GM18951 (cell line): ENCODE measurements at regions of chr6 and their contacts with region 1.

Region 1: GRCh38 chr6:82006027-82006738 is 241.4 kb downstream of the IBTK start:
- POLR2A ChIP-seq: no peak

Region 2: GRCh38 chr6:80605165-80605989 is 1400.8 kb before region 1 on chr6:
- in situ Hi-C with region 1: loop called (anchors 25 kb)
- POLR2A ChIP-seq: no peak

Region 3: DNA sequence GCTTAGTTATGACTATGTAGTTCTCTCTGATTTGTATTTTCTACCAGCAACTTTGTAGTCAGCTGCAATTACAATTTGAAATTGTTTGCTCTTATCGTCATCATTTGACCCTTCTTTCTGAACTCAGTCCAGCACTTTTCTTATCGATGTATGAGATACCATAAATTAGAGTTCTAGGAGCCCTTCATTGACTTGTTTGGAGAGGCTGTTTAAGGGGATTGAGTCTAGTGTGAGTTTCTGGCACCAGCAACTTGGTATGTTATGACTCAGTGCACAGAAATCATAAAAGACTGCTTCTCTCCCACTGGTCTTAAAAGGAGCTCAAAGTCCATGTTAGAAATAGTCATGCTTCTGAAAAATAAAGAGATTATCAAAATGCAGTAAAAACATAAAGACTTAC is 444.0 kb before region 1 on chr6:
- in situ Hi-C with region 1: no loop called
- POLR2A ChIP-seq: no peak

Region 4: DNA sequence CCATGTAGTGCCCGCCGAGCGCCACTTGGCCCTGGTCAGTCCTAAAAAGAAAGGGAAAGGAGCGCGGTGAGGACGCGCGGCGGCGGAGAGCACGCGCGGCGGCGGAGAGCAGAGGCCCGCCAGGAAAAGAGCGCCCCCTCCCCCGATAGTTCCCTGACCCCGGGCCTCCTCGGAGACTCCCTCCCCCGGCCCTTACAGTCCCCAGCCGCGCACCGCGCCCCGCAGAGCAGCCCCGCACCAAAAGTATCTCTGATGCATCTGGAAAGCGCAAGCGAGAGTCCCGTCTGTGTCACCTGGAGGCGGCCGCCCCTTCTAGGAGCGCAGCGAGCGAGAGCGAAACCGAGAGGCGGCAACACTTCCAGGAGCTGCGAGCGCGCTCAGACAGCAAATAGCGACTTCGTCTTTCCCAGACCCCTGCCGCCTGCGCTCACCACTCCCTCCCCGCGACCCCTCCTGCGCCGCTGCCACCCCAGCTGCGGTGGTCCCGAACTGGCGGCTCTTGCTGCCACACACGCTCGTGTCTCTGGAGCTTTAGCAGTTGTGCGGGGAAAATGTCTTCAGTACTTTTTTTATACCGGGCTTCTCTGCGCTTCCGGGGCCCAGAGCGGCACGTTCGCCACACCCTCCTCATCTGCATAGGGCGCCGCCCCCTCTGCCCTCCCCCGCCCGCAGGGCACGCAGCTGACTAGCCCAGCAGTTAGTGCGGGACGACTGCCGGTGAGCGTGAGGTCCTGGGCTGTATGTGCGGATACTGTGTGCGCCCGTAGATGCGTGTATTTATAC is 253.9 kb before region 1 on chr6 and contains the start of gene TENT5A:
- in situ Hi-C with region 1: no loop called
- POLR2A ChIP-seq: peak; percentile 84

Region 5: GRCh38 chr6:82525775-82526537 is 519.8 kb after region 1 on chr6:
- in situ Hi-C with region 1: no loop called
- POLR2A ChIP-seq: no peak